Dendritic cell treated with granulocyte-macrophage colony-stimulating factor and Interleukin-4, amounts not matched to agents 40 ng/mL and 50 ng/mL, for 4 days (primary cell): ENCODE measurements at regions of chr5 and their contacts with region 1.

Region 1: GRCh38 chr5:160508780-160509361 is 87.2 kb downstream of the PTTG1 start:
- H3K4me3 Mint-ChIP-seq: peak overlapping the region; percentile 28
- H3K27ac Mint-ChIP-seq: peak overlapping the region; percentile 94
- H3K4me1 Mint-ChIP-seq: peaks cover 51% of the 10 kb centered on the region
- H3K27me3 Mint-ChIP-seq: peaks cover 6% of the 10 kb centered on the region

Region 2: DNA sequence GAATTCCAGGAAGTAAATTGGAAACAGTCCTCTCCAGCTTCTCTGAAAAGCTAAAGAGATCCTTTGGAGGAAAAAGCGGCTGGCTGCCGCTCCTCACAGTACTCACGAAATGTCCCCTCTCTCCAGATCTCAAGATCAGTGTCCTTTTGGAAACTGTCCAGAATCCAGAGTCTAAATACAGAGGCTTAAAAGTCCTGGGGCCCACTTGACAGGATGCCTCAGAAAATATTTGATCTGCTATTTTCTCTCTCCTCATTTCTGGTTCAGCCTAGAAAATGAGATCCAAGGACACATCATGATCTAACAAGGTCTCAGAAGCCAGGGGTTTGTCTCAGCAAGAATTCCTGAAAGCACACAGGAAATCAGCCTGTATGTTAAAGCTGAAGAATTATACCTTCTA is 145.7 kb before region 1 on chr5:
- intact Hi-C with region 1: no loop called
- H3K4me3 Mint-ChIP-seq: no peak overlapping the region
- H3K27ac Mint-ChIP-seq: no peak overlapping the region
- H3K4me1 Mint-ChIP-seq: peaks cover 5% of the 10 kb centered on the region
- H3K27me3 Mint-ChIP-seq: peaks cover 2% of the 10 kb centered on the region

Region 3: GRCh38 chr5:160439205-160439600 is 69.7 kb before region 1 on chr5:
- intact Hi-C with region 1: loop called (anchors 1 kb)
- H3K4me3 Mint-ChIP-seq: peak overlapping the region; percentile 75
- H3K27ac Mint-ChIP-seq: peak overlapping the region; percentile 77
- H3K4me1 Mint-ChIP-seq: peaks cover 58% of the 10 kb centered on the region
- H3K27me3 Mint-ChIP-seq: no peaks in the 10 kb centered on the region

Region 4: DNA sequence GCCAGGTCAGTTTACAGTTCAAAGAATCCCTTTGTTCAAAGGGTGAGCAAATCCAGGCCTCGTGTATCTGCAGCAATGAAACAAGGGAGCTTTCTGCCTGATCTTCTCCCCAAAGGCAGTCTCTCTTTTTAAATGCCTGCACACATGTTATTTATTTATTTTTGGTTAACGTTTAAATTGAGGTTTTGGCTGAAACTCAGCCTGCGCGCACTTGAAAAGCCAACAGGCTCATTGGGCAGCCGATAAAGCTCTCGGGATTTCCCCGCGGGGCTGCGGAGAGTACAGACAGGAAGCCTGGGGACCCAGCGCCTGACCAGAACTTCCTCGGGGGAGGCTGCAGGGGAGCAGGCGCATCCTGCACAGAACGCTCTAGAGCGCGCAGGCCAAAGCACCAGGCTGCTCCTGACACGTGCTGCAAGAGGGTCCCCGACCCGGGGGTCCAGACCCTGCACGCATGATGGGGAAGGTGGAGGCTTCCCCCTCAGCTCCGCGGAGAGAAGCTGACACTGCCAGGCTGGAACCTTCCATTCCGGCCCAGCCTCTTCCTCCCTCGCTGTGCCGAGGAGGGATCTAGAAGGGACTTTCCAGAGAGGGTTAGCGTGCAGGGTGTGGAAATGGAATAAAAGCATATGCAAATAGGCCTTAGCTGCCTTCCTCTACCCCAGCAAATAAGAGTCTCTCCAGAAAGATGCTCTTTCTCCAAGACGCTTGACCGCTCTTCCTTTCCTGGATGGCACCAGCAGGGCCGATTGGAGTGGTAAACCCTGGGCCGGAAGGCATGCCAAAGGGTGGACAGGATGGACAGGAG is 41.1 kb before region 1 on chr5:
- intact Hi-C with region 1: loop called (anchors 1 kb)
- H3K4me3 Mint-ChIP-seq: peak overlapping the region; percentile 92
- H3K27ac Mint-ChIP-seq: peak overlapping the region; percentile 86
- H3K4me1 Mint-ChIP-seq: peaks cover 46% of the 10 kb centered on the region
- H3K27me3 Mint-ChIP-seq: peaks cover 2% of the 10 kb centered on the region

Region 5: DNA sequence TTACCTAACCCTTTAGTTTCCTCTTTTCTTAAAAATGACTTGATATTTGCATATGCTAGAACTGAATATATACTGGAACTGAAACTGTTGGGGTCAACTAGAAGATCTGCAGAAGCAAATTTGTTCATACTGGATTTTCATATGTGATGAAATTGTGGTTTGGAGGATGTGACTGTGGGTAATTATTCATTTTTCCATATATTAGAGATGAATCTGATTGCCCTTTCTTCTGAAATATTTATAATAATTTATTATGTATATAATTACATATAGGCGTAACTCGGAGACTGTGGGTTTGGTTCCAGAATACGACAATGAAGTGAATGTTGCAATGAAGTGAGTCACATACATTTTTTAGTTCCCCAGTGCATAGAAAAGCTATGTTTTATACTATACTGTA is 194.1 kb after region 1 on chr5:
- intact Hi-C with region 1: loop called (anchors 10 kb)
- H3K4me3 Mint-ChIP-seq: no peak overlapping the region
- H3K27ac Mint-ChIP-seq: no peak overlapping the region
- H3K4me1 Mint-ChIP-seq: peaks cover 40% of the 10 kb centered on the region
- H3K27me3 Mint-ChIP-seq: peaks cover 2% of the 10 kb centered on the region

Region 6: GRCh38 chr5:160835376-160835775 is 326.5 kb after region 1 on chr5:
- intact Hi-C with region 1: loop called (anchors 5 kb)
- H3K4me3 Mint-ChIP-seq: no peak overlapping the region
- H3K27ac Mint-ChIP-seq: no peak overlapping the region
- H3K4me1 Mint-ChIP-seq: peaks cover 20% of the 10 kb centered on the region
- H3K27me3 Mint-ChIP-seq: no peaks in the 10 kb centered on the region

Region 7: DNA sequence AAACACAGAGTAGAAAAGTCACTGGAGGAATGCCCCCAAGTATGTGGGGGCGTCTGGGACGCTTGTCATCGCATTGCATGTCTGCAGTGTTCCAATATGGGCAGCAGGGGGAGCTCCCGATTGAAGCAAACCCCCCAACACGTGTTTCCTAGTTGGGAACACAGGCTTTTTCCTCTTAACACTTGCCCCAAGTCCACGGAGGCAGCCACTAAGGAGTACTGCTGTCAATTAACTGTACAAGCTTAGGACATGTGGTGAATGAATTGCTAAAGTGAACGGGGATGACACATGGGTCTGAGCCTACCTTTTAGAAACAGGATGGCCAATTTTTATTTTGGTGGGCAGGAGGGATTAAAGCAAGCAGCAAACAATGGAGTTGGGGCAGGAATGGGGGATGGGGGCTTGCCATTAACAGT is 1035.5 kb after region 1 on chr5:
- intact Hi-C with region 1: loop called (anchors 5 kb)
- H3K4me3 Mint-ChIP-seq: no peak overlapping the region
- H3K27ac Mint-ChIP-seq: no peak overlapping the region
- H3K4me1 Mint-ChIP-seq: peaks cover 26% of the 10 kb centered on the region
- H3K27me3 Mint-ChIP-seq: peaks cover 48% of the 10 kb centered on the region